Esophagus squamous epithelium (tissue), 5 donors: ENCODE measurements at regions of chr13 and their contacts with region 1.

Region 1: GRCh38 chr13:49784886-49785570 is 7.5 kb downstream of the KPNA3 start:
- DNase-seq: no peak
- H3K4me3 ChIP-seq: no peak overlapping the region
- H3K27ac ChIP-seq: no peak overlapping the region
- H3K4me1 ChIP-seq: peaks cover 0 to 36% (median 0%) of the 10 kb centered on the region in 3 donors
- H3K27me3 ChIP-seq: no peaks in the 10 kb centered on the region
- CTCF ChIP-seq: no peak
- POLR2A ChIP-seq: no peak

Region 2: GRCh38 chr13:48818495-48819031 is 966.5 kb before region 1 on chr13:
- intact Hi-C with region 1: no loop called
- DNase-seq: no peak
- H3K4me3 ChIP-seq: no peak overlapping the region
- H3K27ac ChIP-seq: peak overlapping the region in 2 of 4 donors; percentile 7 to 29
- H3K4me1 ChIP-seq: peaks cover 0 to 7% (median 0%) of the 10 kb centered on the region in 3 donors
- H3K27me3 ChIP-seq: no peaks in the 10 kb centered on the region
- CTCF ChIP-seq: no peak
- POLR2A ChIP-seq: no peak

Region 3: DNA sequence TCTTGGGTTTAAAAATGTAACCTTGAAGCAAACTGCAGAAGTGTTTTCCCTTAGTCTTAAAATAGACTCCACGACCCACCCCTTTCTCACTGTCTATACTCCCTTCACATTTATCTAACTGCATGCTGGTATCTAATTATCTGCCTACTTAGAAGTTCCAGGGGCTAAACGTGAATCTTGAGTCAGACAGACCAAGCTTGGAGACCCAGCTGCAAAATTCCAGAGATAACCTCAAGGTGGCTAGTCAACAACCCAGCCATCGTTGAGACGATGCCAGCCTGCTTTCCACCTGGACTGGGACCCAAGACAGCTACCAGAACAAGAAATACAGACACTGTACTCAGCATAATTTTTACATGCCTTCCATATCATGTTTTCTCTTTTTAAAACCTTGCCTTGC is 455.2 kb before region 1 on chr13:
- intact Hi-C with region 1: no loop called
- DNase-seq: no peak
- H3K4me3 ChIP-seq: no peak overlapping the region
- H3K27ac ChIP-seq: no peak overlapping the region
- H3K4me1 ChIP-seq: no peaks in the 10 kb centered on the region
- H3K27me3 ChIP-seq: no peaks in the 10 kb centered on the region
- CTCF ChIP-seq: no peak
- POLR2A ChIP-seq: no peak

Region 4: DNA sequence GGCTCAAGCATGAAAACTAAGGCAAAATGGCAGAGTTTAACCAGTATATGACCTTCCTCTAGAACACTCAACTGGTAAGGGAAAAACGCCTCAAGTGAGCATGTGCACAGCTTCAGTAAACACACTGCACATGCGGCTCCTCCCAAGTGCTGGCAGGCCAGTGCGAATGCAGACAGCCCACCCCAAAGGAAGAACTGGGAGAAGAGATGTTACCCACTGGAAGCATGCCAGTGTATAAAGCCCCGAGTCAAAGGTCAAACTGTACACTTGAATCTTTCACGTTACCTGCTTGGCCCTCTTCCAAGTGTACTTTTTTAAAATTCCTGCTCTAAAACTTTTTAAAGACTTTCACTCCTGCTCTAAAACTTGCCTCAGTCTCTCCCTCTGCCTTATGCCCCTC is 180.5 kb before region 1 on chr13:
- intact Hi-C with region 1: no loop called
- DNase-seq: no peak
- H3K4me3 ChIP-seq: no peak overlapping the region
- H3K27ac ChIP-seq: no peak overlapping the region
- H3K4me1 ChIP-seq: peaks cover 0 to 20% (median 0%) of the 10 kb centered on the region in 3 donors
- H3K27me3 ChIP-seq: no peaks in the 10 kb centered on the region
- CTCF ChIP-seq: no peak
- POLR2A ChIP-seq: no peak

Region 5: GRCh38 chr13:49681842-49682435 is 103.1 kb before region 1 on chr13:
- intact Hi-C with region 1: loop called (anchors 10 kb)
- DNase-seq: no peak
- H3K4me3 ChIP-seq: no peak overlapping the region
- H3K27ac ChIP-seq: peak overlapping the region in 2 of 4 donors; percentile 45 to 53
- H3K4me1 ChIP-seq: peaks cover 0 to 19% (median 0%) of the 10 kb centered on the region in 3 donors
- H3K27me3 ChIP-seq: no peaks in the 10 kb centered on the region
- CTCF ChIP-seq: no peak
- POLR2A ChIP-seq: no peak